ENCODE measurements at regions of chr22 and their contacts with region 1.

Region 1: DNA sequence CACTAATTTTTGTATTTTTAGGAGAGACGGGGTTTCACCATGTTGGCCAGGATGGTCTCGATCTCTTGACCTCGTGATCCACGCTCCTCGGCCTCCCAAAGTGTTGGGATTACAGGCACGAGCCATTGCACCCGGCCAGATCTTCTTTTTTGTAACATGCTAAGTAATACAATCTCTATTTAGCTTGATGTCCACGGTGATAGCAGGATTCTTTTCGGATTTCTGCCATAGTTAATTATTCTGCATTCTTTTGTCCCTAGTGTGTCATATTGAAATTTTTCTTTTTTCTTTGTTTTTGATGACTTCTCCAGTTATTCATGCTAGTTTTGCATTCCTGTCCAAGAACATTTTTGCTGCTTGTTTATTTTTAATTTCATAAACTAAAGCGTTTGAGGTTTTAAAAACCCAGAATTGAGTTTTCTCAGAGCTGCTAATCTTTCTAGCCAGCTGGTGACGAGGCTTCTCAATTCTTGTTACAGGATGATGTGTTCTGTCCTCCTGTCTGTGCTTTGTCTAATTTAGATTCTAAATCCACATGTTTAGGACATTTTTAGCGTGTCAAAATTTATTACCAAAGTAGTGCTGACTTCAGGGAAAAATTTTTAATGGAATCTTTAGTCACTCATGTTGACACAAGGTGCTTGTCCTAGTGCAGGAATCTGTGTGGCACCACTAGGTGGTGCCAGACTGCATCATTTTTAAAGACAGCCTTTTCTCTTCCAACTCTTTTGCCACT is 21.8 kb downstream of the NF2 start:
- DNase-seq: no peak
- ATAC-seq: peak; percentile 79
- H3K4me3 ChIP-seq: no peak overlapping the region
- H3K27ac ChIP-seq: no peak overlapping the region
- H3K4me1 ChIP-seq: peaks cover 5% of the 10 kb centered on the region; the same call in 1 of the 2 replicates
- H3K27me3 ChIP-seq: no peaks in the 10 kb centered on the region
- CTCF ChIP-seq: peak; percentile 74 to 93 (median 87)
- EP300 ChIP-seq: no peak
- POLR2A ChIP-seq: no peak
- RAD21 ChIP-seq: peak; percentile 58; the same call in 1 of the 2 replicates

Region 2: GRCh38 chr22:28810821-28811491 is 814.3 kb before region 1 on chr22:
- CTCF ChIA-PET with region 1: no interaction called
- POLR2A ChIA-PET with region 1: no interaction called
- RAD21 ChIA-PET with region 1: no interaction called
- SMC1A ChIA-PET with region 1: no interaction called
- in situ Hi-C with region 1: no loop called
- intact Hi-C with region 1: no loop called
- DNase-seq: no peak
- ATAC-seq: peak; percentile 34
- H3K4me3 ChIP-seq: no peak overlapping the region
- H3K27ac ChIP-seq: peak overlapping the region; percentile 51; the same call in 1 of the 2 replicates
- H3K4me1 ChIP-seq: peaks cover 21% of the 10 kb centered on the region
- H3K27me3 ChIP-seq: no peaks in the 10 kb centered on the region
- CTCF ChIP-seq: no peak
- EP300 ChIP-seq: no peak
- POLR2A ChIP-seq: no peak
- RAD21 ChIP-seq: no peak

Region 3: DNA sequence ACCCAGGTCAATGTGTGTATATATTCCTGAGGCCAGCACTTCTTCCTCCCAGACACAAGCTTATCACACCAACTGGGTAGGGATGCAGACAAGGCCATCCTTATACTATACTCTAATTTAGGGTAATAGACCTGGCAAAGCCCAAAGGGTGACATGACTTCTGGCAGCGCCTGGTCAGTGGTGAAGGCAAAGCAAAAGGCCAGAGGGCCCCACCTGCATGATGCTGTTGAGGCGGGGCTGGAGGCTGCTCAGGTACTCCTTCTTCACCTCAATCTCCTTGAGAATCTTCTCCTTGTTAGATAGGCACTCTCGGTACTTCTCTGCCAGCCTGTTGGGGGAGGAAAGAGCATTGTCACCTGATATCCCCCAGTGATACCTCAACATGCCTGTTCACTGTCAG is 88.8 kb before region 1 on chr22:
- CTCF ChIA-PET with region 1: no interaction called
- POLR2A ChIA-PET with region 1: interaction called, 10 read pairs
- RAD21 ChIA-PET with region 1: no interaction called
- SMC1A ChIA-PET with region 1: no interaction called
- in situ Hi-C with region 1: no loop called
- intact Hi-C with region 1: no loop called
- DNase-seq: no peak
- ATAC-seq: no peak
- H3K4me3 ChIP-seq: no peak overlapping the region
- H3K27ac ChIP-seq: no peak overlapping the region
- H3K4me1 ChIP-seq: no peaks in the 10 kb centered on the region
- H3K27me3 ChIP-seq: no peaks in the 10 kb centered on the region
- CTCF ChIP-seq: no peak
- EP300 ChIP-seq: no peak
- POLR2A ChIP-seq: no peak
- RAD21 ChIP-seq: no peak

Region 4: DNA sequence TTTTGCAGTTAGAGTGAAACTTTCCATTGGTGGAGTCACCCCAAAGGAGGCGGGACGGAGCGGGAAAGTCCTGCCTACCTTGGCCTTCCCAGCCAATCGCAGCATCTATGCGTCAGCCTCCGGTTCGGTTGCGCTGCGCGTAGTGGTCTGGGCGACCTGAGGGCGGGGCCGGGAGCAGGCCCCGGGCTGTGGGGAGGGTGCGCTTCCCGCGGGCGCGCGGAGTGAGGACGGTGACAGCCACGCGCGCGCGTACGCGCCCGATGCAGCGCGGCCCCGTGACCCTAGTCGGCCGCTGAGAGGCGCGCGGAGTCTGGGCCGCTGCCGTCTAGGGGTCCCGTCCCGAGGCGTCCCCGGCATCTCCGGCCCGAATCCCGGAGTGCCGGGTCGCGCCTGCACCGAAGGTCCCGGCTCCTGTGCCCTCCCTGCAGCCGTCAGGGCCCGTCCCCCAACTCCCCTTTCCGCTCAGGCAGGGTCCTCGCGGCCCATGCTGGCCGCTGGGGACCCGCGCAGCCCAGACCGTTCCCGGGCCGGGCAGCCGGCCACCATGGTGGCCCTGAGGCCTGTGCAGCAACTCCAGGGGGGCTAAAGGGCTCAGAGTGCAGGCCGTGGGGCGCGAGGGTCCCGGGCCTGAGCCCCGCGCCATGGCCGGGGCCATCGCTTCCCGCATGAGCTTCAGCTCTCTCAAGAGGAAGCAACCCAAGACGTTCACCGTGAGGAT is 21.7 kb before region 1 on chr22 and contains the start of gene NF2:
- CTCF ChIA-PET with region 1: interaction called, 34 read pairs
- POLR2A ChIA-PET with region 1: interaction called, 3 read pairs
- RAD21 ChIA-PET with region 1: interaction called, 8 read pairs
- SMC1A ChIA-PET with region 1: interaction called, 23 read pairs
- in situ Hi-C with region 1: no loop called
- intact Hi-C with region 1: no loop called
- DNase-seq: peak; percentile 100
- ATAC-seq: peak; percentile 98
- H3K4me3 ChIP-seq: peak within 1 kb of the TSS; percentile 94
- H3K27ac ChIP-seq: peak within 1 kb of the TSS; percentile 81
- H3K4me1 ChIP-seq: no peaks in the 10 kb centered on the region; the same call in 1 of the 2 replicates
- H3K27me3 ChIP-seq: no peaks in the 10 kb centered on the region
- CTCF ChIP-seq: peak in 1 of 3 experiments; percentile 16; a peak in 1 of 6 replicates
- EP300 ChIP-seq: no peak
- POLR2A ChIP-seq: peak; percentile 95
- RAD21 ChIP-seq: no peak
- polyA plus RNA-seq, gene NF2: 2.2 to 3.0 TPM

Region 5: DNA sequence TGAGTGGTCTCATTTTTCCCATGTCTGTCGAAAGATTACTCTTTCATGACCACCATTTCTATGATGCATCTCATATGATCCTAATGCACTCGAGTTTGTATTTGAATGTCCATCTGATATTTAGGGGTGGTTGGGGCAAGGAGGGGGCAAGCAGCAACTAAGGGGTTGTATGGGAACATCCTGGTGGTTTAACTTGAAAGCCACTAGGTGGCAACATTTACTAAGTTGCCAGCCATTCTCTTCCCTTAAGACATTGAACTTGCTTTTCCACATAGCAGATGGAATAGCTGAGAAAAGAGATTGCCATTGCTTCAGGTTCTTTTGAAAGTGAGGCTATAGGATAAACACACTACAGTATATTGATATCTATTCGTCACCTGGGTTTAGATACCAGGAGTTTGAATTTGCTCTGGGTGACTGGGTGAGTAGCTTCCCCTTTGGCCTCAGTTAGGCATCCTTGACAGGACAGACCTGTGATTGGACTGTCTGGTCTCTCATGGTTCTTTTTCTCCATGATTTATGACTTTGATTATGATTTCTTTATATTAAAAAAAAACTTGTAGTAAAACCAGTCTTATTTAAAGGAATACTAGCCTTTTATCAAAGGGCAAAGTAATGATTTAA is 10.6 kb after region 1 on chr22:
- CTCF ChIA-PET with region 1: interaction called, 46 read pairs
- POLR2A ChIA-PET with region 1: no interaction called
- RAD21 ChIA-PET with region 1: interaction called, 5 read pairs
- SMC1A ChIA-PET with region 1: interaction called, 9 read pairs
- in situ Hi-C with region 1: no loop called
- intact Hi-C with region 1: no loop called
- DNase-seq: peak; percentile 23
- ATAC-seq: peak; percentile 78
- H3K4me3 ChIP-seq: no peak overlapping the region
- H3K27ac ChIP-seq: no peak overlapping the region
- H3K4me1 ChIP-seq: peaks cover 11% of the 10 kb centered on the region
- H3K27me3 ChIP-seq: no peaks in the 10 kb centered on the region
- CTCF ChIP-seq: peak; percentile 62 to 79 (median 70)
- EP300 ChIP-seq: no peak
- POLR2A ChIP-seq: no peak
- RAD21 ChIP-seq: peak; percentile 72

Region 6: GRCh38 chr22:29689880-29690213 is 64.6 kb after region 1 on chr22:
- CTCF ChIA-PET with region 1: interaction called, 11 read pairs
- POLR2A ChIA-PET with region 1: no interaction called
- RAD21 ChIA-PET with region 1: interaction called, 4 read pairs
- SMC1A ChIA-PET with region 1: no interaction called
- in situ Hi-C with region 1: no loop called
- intact Hi-C with region 1: no loop called
- DNase-seq: no peak
- ATAC-seq: peak; percentile 63
- H3K4me3 ChIP-seq: no peak overlapping the region
- H3K27ac ChIP-seq: no peak overlapping the region
- H3K4me1 ChIP-seq: no peaks in the 10 kb centered on the region
- H3K27me3 ChIP-seq: no peaks in the 10 kb centered on the region
- CTCF ChIP-seq: peak; percentile 61 to 69 (median 67); a peak in 5 of 6 replicates
- EP300 ChIP-seq: no peak
- POLR2A ChIP-seq: no peak
- RAD21 ChIP-seq: peak; percentile 55

Measured in GM12878 (cell line).